ENCODE measurements at regions of chr20 and their contacts with region 1.

Region 1: DNA sequence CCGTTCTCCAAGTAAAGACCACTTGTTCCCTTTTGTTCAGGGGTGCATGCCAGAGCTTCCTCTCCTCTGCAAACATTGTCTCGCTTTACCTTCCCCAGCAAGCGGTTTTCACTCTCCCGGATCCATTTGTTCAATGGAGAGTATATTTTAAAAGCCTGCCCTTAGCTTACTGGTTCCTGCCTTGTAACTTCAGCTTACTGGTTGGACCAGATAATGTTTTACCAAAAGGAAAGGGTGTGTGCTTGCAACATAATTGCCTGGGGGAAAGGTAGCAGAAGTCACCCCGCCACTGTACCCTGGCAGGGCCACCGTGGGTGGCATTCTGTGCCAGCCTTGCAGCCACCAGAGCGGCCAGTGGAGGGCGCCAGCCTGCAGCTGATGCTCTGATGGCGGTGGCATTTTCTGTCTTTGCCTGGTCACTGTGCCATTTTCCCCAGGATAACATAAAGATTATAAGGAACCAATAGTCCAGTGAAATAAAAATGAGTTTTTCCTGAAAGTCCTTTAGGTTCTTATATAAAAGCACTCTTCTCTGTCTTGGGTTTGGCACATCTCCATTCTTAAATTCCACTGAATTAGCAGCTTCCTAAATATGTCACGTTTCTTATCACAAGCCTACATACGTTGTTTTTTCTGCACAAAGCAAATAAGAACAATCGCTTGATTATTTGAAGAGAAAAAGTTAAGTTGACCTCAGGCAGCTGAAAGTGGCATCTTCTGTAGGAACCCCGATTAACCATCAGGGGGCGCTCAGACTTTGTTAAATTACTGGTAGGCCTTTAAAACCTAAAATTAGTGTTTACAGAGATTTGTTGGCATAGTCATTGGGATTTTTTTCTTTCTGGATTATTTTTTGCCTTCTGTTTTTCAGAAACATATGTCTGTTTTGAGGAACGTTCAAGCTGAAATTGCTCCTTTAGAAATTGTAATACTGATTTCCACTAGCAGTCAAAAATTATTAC is 67.4 kb upstream of the XRN2 start:
- DNase-seq: peak; percentile 77
- ATAC-seq: peak; percentile 88
- H3K4me3 ChIP-seq: no peak overlapping the region
- H3K27ac ChIP-seq: no peak overlapping the region
- H3K4me1 ChIP-seq: peaks cover 6% of the 10 kb centered on the region; the same call in 1 of the 2 replicates
- H3K27me3 ChIP-seq: no peaks in the 10 kb centered on the region
- CTCF ChIP-seq: peak; percentile 91
- EP300 ChIP-seq: no peak
- POLR2A ChIP-seq: no peak
- RAD21 ChIP-seq: peak; percentile 79

Region 2: GRCh38 chr20:21048841-21049273 is 186.9 kb before region 1 on chr20:
- CTCF ChIA-PET with region 1: interaction called, 3 read pairs
- POLR2A ChIA-PET with region 1: no interaction called
- in situ Hi-C with region 1: no loop called
- intact Hi-C with region 1: loop called (anchors 1 kb)
- DNase-seq: peak; percentile 55
- ATAC-seq: peak; percentile 77
- H3K4me3 ChIP-seq: no peak overlapping the region
- H3K27ac ChIP-seq: no peak overlapping the region
- H3K4me1 ChIP-seq: peaks cover 58% of the 10 kb centered on the region
- H3K27me3 ChIP-seq: no peaks in the 10 kb centered on the region
- CTCF ChIP-seq: peak; percentile 79
- EP300 ChIP-seq: no peak
- POLR2A ChIP-seq: no peak
- RAD21 ChIP-seq: peak; percentile 75

Region 3: DNA sequence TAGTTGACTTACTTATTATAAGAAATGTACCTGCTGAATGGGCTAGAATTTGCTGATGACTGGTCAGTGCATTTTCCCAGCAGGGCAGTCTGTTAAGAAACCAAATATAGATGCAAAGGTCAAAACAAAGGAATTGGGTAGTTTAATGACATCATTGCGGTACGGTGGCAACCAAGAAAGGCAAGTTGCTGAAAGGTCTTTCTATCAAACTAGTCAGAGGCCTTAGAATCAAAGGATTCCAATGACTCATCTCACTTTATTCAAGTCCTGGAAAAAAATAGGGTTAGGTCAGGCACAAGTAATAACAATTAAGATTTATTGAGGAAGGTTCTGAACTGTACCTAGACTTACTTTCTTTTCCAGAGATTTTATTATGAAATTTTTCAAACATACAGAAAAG is 33.5 kb before region 1 on chr20:
- CTCF ChIA-PET with region 1: no interaction called
- POLR2A ChIA-PET with region 1: no interaction called
- in situ Hi-C with region 1: no loop called
- intact Hi-C with region 1: no loop called
- DNase-seq: peak; percentile 16
- ATAC-seq: no peak
- H3K4me3 ChIP-seq: no peak overlapping the region
- H3K27ac ChIP-seq: no peak overlapping the region
- H3K4me1 ChIP-seq: 0 out of 2 replicates have a peak, but pooled peaks cover 6% of the 10 kb centered on the region
- H3K27me3 ChIP-seq: no peaks in the 10 kb centered on the region
- CTCF ChIP-seq: no peak
- EP300 ChIP-seq: no peak
- POLR2A ChIP-seq: no peak
- RAD21 ChIP-seq: no peak

Region 4: GRCh38 chr20:21380711-21381110 is 144.9 kb after region 1 on chr20:
- CTCF ChIA-PET with region 1: no interaction called
- POLR2A ChIA-PET with region 1: no interaction called
- in situ Hi-C with region 1: no loop called
- intact Hi-C with region 1: loop called (anchors 5 kb)
- DNase-seq: no peak
- ATAC-seq: no peak
- H3K4me3 ChIP-seq: no peak overlapping the region
- H3K27ac ChIP-seq: no peak overlapping the region
- H3K4me1 ChIP-seq: peaks cover 9% of the 10 kb centered on the region
- H3K27me3 ChIP-seq: no peaks in the 10 kb centered on the region
- CTCF ChIP-seq: no peak
- EP300 ChIP-seq: no peak
- POLR2A ChIP-seq: no peak
- RAD21 ChIP-seq: no peak

Region 5: DNA sequence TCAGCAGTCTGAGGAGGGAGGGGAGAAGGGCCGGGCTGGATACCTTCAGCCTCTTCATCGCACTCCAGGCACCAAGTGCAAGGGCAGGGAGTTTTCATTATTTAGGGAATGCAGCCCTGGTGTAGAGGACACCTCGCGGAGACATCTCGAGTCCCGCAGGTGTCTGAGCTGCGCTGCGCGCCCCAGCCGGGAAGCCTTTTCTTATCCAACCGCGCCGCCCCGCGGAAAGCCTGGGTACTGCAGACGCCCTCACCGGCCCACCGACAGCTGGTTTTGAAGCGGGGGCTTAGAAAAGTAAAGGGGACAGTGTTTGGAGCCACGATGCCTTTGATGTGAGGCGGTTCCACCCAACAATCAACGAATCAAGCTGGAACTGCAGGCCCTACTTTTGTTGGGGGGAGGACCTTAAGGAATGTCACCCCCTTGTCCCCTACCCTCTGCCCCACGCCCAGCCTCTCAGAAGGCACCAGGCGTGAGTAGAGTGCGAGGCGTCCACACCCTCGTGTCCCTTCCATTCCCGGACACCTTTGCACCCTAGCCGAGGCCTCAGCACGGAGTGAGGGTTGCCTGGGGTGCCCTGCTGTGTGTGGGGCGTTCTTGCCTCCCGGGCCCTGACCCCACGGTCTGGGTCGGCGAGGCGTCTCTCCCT is 269.5 kb after region 1 on chr20:
- CTCF ChIA-PET with region 1: interaction called, 181 read pairs
- POLR2A ChIA-PET with region 1: no interaction called
- in situ Hi-C with region 1: loop called (anchors 5 kb)
- intact Hi-C with region 1: loop called (anchors 1 kb)
- DNase-seq: peak; percentile 55
- ATAC-seq: peak; percentile 75
- H3K4me3 ChIP-seq: peak overlapping the region in 2 of 3 experiments; percentile 19 to 63; a peak in 3 of 6 replicates
- H3K27ac ChIP-seq: no peak overlapping the region
- H3K4me1 ChIP-seq: peaks cover 12% of the 10 kb centered on the region
- H3K27me3 ChIP-seq: peaks cover 10 to 65% of the 10 kb centered on the region in 2 experiments
- CTCF ChIP-seq: peak; percentile 99
- EP300 ChIP-seq: no peak
- POLR2A ChIP-seq: no peak
- RAD21 ChIP-seq: peak; percentile 100

Measured in HepG2 (cell line).